AG04449 (cell line): ENCODE measurements at regions of chr6 and their contacts with region 1.

Region 1: GRCh38 chr6:31403283-31403989 is at the start of gene MICA:
- DNase-seq: peak; percentile 21
- H3K4me3 ChIP-seq: peak within 1 kb of the TSS; percentile 83
- CTCF ChIP-seq: no peak

Region 2: DNA sequence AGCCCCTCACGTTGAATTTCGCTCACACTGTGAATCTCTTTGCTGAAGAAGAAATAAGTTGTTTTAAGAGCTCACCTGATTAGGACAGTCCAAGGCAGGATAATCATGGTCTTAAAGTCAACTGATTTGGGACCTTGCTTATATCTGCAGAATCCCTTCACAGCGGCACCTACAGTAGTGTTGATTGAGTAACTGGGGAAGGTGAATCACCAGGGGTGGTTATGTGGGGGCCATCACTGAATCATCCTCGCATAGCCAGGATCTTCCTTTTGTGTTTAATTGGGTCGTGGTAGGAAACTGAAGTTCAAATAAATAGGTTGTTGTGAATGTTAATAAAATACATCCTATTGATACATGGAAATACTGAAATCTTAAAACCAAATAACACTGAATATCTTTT is 20.3 kb before region 1 on chr6:
- CTCF ChIA-PET with region 1: interaction called, 11 read pairs
- POLR2A ChIA-PET with region 1: interaction called, 3 read pairs
- DNase-seq: no peak
- H3K4me3 ChIP-seq: no peak overlapping the region
- CTCF ChIP-seq: no peak

Region 3: GRCh38 chr6:31450751-31451150 is 47.3 kb after region 1 on chr6:
- CTCF ChIA-PET with region 1: interaction called, 13 read pairs
- POLR2A ChIA-PET with region 1: no interaction called
- DNase-seq: no peak
- H3K4me3 ChIP-seq: no peak overlapping the region
- CTCF ChIP-seq: no peak